GM12878 (cell line): ENCODE measurements at regions of chr19 and their contacts with region 1.

Region 1: GRCh38 chr19:16542045-16542909 is at the start of gene CHERP:
- DNase-seq: peak; percentile 72
- ATAC-seq: peak; percentile 83
- H3K4me3 ChIP-seq: peak within 1 kb of the TSS; percentile 99
- H3K27ac ChIP-seq: peak within 1 kb of the TSS; percentile 74
- H3K4me1 ChIP-seq: peaks cover 14% of the 10 kb centered on the region
- H3K27me3 ChIP-seq: no peaks in the 10 kb centered on the region
- CTCF ChIP-seq: no peak
- EP300 ChIP-seq: no peak
- POLR2A ChIP-seq: peak; percentile 93
- RAD21 ChIP-seq: no peak
- polyA plus RNA-seq, gene CHERP: 0.66 to 1.7 TPM

Region 2: GRCh38 chr19:16446724-16447368 is 95.4 kb before region 1 on chr19:
- CTCF ChIA-PET with region 1: no interaction called
- POLR2A ChIA-PET with region 1: interaction called, 3 read pairs
- RAD21 ChIA-PET with region 1: interaction called, 3 read pairs
- SMC1A ChIA-PET with region 1: interaction called, 5 read pairs
- in situ Hi-C with region 1: no loop called
- intact Hi-C with region 1: loop called (anchors 10 kb)
- DNase-seq: peak; percentile 70
- ATAC-seq: peak; percentile 71
- H3K4me3 ChIP-seq: peak overlapping the region; percentile 12; the same call in 1 of the 2 replicates
- H3K27ac ChIP-seq: peak overlapping the region; percentile 99
- H3K4me1 ChIP-seq: peaks cover 86% of the 10 kb centered on the region
- H3K27me3 ChIP-seq: no peaks in the 10 kb centered on the region
- CTCF ChIP-seq: no peak
- EP300 ChIP-seq: peak in 1 of 2 experiments; percentile 83; a peak in 2 of 4 replicates
- POLR2A ChIP-seq: peak; percentile 53
- RAD21 ChIP-seq: no peak

Region 3: GRCh38 chr19:16615808-16616207 is 73.5 kb after region 1 on chr19:
- CTCF ChIA-PET with region 1: interaction called, 4 read pairs
- POLR2A ChIA-PET with region 1: interaction called, 6 read pairs
- RAD21 ChIA-PET with region 1: no interaction called
- SMC1A ChIA-PET with region 1: interaction called, 3 read pairs
- in situ Hi-C with region 1: no loop called
- intact Hi-C with region 1: loop called (anchors 5 kb)
- DNase-seq: no peak
- ATAC-seq: peak; percentile 42
- H3K4me3 ChIP-seq: no peak overlapping the region
- H3K27ac ChIP-seq: no peak overlapping the region
- H3K4me1 ChIP-seq: peaks cover 42% of the 10 kb centered on the region
- H3K27me3 ChIP-seq: no peaks in the 10 kb centered on the region
- CTCF ChIP-seq: no peak
- EP300 ChIP-seq: no peak
- POLR2A ChIP-seq: no peak
- RAD21 ChIP-seq: no peak